AG04450 (cell line): ENCODE measurements at regions of chr11 and their contacts with region 1.

Region 1: DNA sequence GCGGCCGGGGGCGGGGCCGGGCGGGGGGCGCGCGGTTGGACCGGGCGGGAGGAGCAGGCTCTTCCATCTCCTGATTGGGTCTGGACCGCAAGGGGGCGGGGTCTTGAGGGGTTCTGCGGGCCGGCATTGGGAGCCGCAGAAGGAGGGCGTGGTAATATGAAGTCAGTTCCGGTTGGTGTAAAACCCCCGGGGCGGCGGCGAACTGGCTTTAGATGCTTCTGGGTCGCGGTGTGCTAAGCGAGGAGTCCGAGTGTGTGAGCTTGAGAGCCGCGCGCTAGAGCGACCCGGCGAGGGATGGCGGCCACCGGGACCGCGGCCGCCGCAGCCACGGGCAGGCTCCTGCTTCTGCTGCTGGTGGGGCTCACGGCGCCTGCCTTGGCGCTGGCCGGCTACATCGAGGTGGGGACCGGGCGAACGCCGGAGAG is at the start of gene APLP2:
- DNase-seq: peak; percentile 94
- H3K4me3 ChIP-seq: peak within 1 kb of the TSS; percentile 78
- H3K27ac ChIP-seq: peak within 1 kb of the TSS; percentile 59
- H3K27me3 ChIP-seq: no peaks in the 10 kb centered on the region
- CTCF ChIP-seq: no peak
- polyA plus RNA-seq, gene APLP2: 238 and 273 TPM in 2 replicates

Region 2: GRCh38 chr11:129935723-129936122 is 134.0 kb before region 1 on chr11:
- CTCF ChIA-PET with region 1: interaction called, 11 read pairs
- POLR2A ChIA-PET with region 1: no interaction called
- DNase-seq: no peak
- H3K4me3 ChIP-seq: no peak overlapping the region
- H3K27ac ChIP-seq: no peak overlapping the region
- H3K27me3 ChIP-seq: no peaks in the 10 kb centered on the region
- CTCF ChIP-seq: no peak

Region 3: DNA sequence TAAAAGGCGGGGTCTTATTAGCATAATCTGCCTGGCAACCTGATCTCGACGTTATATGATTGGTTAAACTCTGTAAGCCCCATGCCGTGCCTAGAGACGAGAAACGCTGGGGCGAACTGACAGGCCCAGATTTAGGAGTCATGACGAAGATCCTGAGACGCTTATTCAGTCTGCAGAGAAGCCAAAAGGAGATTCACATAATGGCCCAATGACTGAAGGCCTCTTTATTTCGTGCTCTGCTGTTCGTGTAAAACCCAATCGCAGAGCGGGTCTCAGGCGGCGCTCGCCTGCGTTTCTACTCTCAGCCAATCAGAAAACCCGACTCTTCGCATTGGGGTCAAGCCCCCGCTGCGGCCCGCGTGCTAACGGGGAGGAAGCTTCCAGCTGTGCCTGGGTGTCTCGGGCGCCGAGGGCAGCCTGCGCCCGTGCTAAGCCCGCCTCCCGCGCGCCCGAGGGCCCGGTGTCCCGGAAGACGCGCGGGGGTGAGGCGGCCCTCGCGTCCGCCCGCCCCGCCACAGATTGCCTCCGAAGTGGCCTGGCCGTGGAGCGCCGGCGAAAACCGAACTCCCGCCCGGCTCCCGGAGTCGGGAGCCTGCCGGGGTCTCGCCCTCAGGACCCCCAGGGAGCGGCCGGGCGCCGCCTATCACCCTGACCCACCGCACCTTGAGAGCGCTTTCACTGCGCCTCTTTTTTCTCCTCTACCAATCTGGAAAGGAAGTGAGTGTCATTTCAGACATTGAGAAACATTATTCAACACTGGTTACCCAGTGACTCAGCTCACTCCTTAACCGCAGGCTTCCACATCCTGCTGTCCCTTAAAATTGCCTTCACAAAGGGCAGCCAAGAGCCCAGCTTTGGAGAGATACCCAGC is 66.6 kb before region 1 on chr11:
- CTCF ChIA-PET with region 1: interaction called, 3 read pairs
- POLR2A ChIA-PET with region 1: interaction called, 18 read pairs
- DNase-seq: peak; percentile 94
- H3K4me3 ChIP-seq: peak overlapping the region; percentile 75
- H3K27ac ChIP-seq: peak overlapping the region; percentile 99
- H3K27me3 ChIP-seq: no peaks in the 10 kb centered on the region
- CTCF ChIP-seq: no peak

Region 4: DNA sequence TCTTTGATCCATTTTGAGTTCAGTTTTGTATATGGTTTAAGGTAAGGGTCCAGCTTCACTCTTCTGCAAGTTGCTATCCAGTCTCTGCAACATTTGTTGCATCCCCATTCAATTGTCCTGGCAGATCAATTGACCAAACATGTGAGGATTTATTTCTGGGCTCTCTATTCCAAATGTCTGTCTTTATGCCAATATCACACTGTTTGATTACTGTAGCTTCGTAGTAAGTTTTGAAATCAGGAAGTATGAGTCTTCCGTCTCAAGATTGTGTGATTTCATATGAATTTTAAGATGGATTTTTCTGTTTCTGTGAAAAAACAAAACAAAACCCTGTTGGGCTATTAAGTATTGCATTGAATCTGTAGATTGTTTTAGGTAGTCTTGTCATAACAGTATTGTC is 17.0 kb after region 1 on chr11:
- CTCF ChIA-PET with region 1: interaction called, 13 read pairs
- POLR2A ChIA-PET with region 1: no interaction called
- DNase-seq: no peak
- H3K4me3 ChIP-seq: no peak overlapping the region
- H3K27ac ChIP-seq: no peak overlapping the region
- H3K27me3 ChIP-seq: no peaks in the 10 kb centered on the region
- CTCF ChIP-seq: no peak